ENCODE measurements at regions of chr7 and their contacts with region 1.

Region 1: DNA sequence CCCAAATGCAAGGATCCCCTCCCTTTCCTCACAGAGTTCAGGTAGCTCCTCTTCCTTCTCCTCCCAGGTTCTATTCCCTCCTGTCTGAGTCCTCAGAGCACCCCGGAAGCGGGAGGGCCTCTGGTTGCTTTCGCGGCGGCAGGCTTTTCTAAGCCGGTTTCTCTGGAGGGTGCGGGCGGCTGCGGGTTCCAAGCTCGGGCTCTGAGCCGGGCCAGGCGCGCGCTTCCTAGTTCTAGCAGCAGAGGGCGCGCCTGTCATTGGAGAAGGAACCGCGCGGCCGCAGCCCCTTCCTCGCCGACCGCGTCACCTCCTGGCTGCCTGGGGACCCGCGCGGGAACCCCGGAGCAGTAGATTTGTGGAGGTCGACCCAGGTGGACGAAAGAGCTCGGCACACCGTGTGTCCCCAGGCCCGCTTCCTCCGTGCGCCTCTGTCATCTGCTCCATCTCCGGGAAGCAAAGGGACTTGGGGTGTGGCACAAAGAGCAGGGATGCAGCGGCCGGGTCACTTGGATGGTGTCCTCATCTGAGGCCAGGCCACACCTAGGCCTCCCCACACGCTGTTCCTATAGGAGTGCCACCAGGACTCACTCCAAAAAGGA is 389.0 kb upstream of the PODXL start:
- DNase-seq: peak; percentile 77
- H3K4me3 ChIP-seq: no peak overlapping the region
- H3K27ac ChIP-seq: no peak overlapping the region
- H3K4me1 ChIP-seq: no peaks in the 10 kb centered on the region
- H3K27me3 ChIP-seq: peaks cover 7% of the 10 kb centered on the region
- CTCF ChIP-seq: peak; percentile 92

Region 2: GRCh38 chr7:131688738-131689661 is 256.4 kb before region 1 on chr7:
- CTCF ChIA-PET with region 1: interaction called, 3 read pairs
- POLR2A ChIA-PET with region 1: no interaction called
- intact Hi-C with region 1: loop called (anchors 1 kb)
- DNase-seq: peak; percentile 80
- H3K4me3 ChIP-seq: no peak overlapping the region
- H3K27ac ChIP-seq: no peak overlapping the region
- H3K4me1 ChIP-seq: no peaks in the 10 kb centered on the region
- H3K27me3 ChIP-seq: peaks cover 32% of the 10 kb centered on the region
- CTCF ChIP-seq: peak; percentile 94

Region 3: DNA sequence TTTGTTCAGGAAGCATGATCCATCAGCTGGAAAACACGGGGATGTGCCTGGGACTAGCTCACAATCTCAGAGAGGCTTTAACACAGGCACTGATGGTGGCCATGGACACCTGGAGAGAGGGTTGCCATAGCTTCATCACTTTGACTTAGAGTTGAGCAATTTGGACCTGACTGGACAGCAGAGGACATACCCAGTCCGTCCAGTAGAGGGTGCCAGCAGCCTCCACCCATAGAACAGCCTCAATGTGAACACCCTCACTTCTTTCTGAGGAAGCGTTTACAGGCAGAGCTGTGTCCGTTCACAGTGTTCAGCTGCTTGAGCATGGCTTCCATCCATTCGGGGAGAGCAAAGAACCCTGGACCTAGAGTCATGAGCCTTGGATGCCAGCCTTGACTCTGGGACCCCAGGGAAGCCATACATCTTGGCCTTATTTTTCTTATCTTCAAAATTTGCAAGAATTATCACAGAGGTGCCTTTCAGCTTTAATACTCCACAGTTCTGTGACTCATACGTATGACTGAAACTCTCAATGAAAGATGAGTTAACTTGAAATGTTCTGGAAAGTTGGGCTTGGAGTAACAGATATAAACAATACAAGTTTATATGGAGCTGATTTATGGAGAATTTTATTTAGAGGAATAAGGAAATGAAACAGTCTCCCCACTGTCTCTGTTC is 86.1 kb before region 1 on chr7:
- CTCF ChIA-PET with region 1: interaction called, 4 read pairs
- POLR2A ChIA-PET with region 1: no interaction called
- intact Hi-C with region 1: loop called (anchors 1 kb)
- DNase-seq: peak; percentile 77
- H3K4me3 ChIP-seq: no peak overlapping the region
- H3K27ac ChIP-seq: no peak overlapping the region
- H3K4me1 ChIP-seq: no peaks in the 10 kb centered on the region
- H3K27me3 ChIP-seq: no peaks in the 10 kb centered on the region
- CTCF ChIP-seq: peak; percentile 91

Region 4: GRCh38 chr7:132049462-132050304 is 104.3 kb after region 1 on chr7:
- CTCF ChIA-PET with region 1: no interaction called
- POLR2A ChIA-PET with region 1: interaction called, 3 read pairs
- intact Hi-C with region 1: loop called (anchors 1 kb)
- DNase-seq: peak; percentile 54
- H3K4me3 ChIP-seq: no peak overlapping the region
- H3K27ac ChIP-seq: no peak overlapping the region
- H3K4me1 ChIP-seq: no peaks in the 10 kb centered on the region
- H3K27me3 ChIP-seq: peaks cover 12% of the 10 kb centered on the region
- CTCF ChIP-seq: peak; percentile 87

Region 5: GRCh38 chr7:132117211-132117610 is 171.8 kb after region 1 on chr7:
- CTCF ChIA-PET with region 1: no interaction called
- POLR2A ChIA-PET with region 1: no interaction called
- intact Hi-C with region 1: no loop called
- DNase-seq: no peak
- H3K4me3 ChIP-seq: no peak overlapping the region
- H3K27ac ChIP-seq: no peak overlapping the region
- H3K4me1 ChIP-seq: no peaks in the 10 kb centered on the region
- H3K27me3 ChIP-seq: no peaks in the 10 kb centered on the region
- CTCF ChIP-seq: no peak

Region 6: DNA sequence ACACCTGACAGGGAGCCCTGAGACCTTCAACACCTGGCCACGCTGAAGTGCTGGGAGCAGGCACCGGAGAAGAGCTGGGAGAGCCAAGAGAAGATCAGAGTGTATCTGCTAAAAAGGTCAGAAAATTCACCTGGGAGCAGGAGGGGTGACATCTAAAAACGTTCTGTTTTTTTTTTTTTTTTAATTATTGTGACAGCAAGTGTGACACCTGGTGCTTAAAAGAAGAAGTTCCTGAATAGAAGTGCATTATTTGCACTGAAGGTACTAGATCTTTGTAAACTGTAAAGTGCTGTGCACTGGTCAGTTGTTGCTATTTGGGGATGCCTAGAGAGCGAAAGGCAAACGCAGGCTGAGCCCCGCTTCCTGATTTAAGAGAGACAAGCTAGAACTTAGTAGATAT is 208.8 kb after region 1 on chr7:
- CTCF ChIA-PET with region 1: no interaction called
- POLR2A ChIA-PET with region 1: no interaction called
- intact Hi-C with region 1: loop called (anchors 10 kb)
- DNase-seq: no peak
- H3K4me3 ChIP-seq: no peak overlapping the region
- H3K27ac ChIP-seq: no peak overlapping the region
- H3K4me1 ChIP-seq: no peaks in the 10 kb centered on the region
- H3K27me3 ChIP-seq: peaks cover 34% of the 10 kb centered on the region
- CTCF ChIP-seq: no peak

Region 7: DNA sequence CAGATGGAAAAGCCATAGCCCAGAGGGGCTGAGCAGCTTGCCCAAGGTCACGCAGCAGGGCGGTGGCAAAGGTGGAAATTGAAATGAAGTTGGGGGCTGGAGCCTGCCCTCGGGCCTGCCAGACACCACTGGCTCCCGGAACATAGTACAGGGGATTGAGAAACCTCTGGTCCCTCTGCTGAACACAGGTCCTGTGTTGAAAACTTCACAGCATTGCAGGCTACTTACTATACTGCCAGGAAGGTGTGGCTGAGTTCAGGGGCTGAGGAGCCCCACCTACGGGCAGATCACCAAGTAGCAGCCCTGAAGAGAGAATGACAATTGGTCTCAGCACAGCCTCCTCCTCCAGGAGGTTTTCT is 304.2 kb after region 1 on chr7:
- CTCF ChIA-PET with region 1: no interaction called
- POLR2A ChIA-PET with region 1: no interaction called
- intact Hi-C with region 1: loop called (anchors 10 kb)
- DNase-seq: peak; percentile 10
- H3K4me3 ChIP-seq: no peak overlapping the region
- H3K27ac ChIP-seq: no peak overlapping the region
- H3K4me1 ChIP-seq: no peaks in the 10 kb centered on the region
- H3K27me3 ChIP-seq: peaks cover 40% of the 10 kb centered on the region
- CTCF ChIP-seq: no peak

Region 8: GRCh38 chr7:132580717-132581285 is 635.4 kb after region 1 on chr7:
- CTCF ChIA-PET with region 1: no interaction called
- POLR2A ChIA-PET with region 1: no interaction called
- intact Hi-C with region 1: loop called (anchors 2 kb)
- DNase-seq: peak; percentile 78
- H3K4me3 ChIP-seq: no peak overlapping the region
- H3K27ac ChIP-seq: no peak overlapping the region
- H3K4me1 ChIP-seq: peaks cover 9% of the 10 kb centered on the region
- H3K27me3 ChIP-seq: peaks cover 47% of the 10 kb centered on the region
- CTCF ChIP-seq: peak; percentile 76

Measured in A673 (cell line).